Activated naive CD4-positive, alpha-beta T cell treated with anti-CD3 and anti-CD28 coated beads for 36 hours (primary cell): ENCODE measurements at regions of chr1 and their contacts with region 1.

Region 1: GRCh38 chr1:203603940-203604591 is 22.6 kb upstream of the ATP2B4 start:
- DNase-seq: no peak
- H3K4me3 Mint-ChIP-seq: no peak overlapping the region
- H3K27ac Mint-ChIP-seq: no peak overlapping the region
- H3K4me1 Mint-ChIP-seq: peaks cover 32% of the 10 kb centered on the region
- H3K27me3 Mint-ChIP-seq: no peaks in the 10 kb centered on the region

Region 2: GRCh38 chr1:203420263-203420662 is 183.8 kb before region 1 on chr1:
- CTCF ChIA-PET with region 1: no interaction called
- intact Hi-C with region 1: no loop called
- DNase-seq: no peak
- H3K4me3 Mint-ChIP-seq: no peak overlapping the region
- H3K27ac Mint-ChIP-seq: no peak overlapping the region
- H3K4me1 Mint-ChIP-seq: no peaks in the 10 kb centered on the region
- H3K27me3 Mint-ChIP-seq: peaks cover 9% of the 10 kb centered on the region

Region 3: GRCh38 chr1:203512830-203513611 is 91.0 kb before region 1 on chr1:
- CTCF ChIA-PET with region 1: no interaction called
- intact Hi-C with region 1: loop called (anchors 2 kb)
- DNase-seq: peak; percentile 83
- H3K4me3 Mint-ChIP-seq: peak overlapping the region; percentile 42
- H3K27ac Mint-ChIP-seq: peak overlapping the region; percentile 82
- H3K4me1 Mint-ChIP-seq: peaks cover 36% of the 10 kb centered on the region
- H3K27me3 Mint-ChIP-seq: no peaks in the 10 kb centered on the region